Panc1 (cell line): ENCODE measurements at regions of chrX and their contacts with region 1.

Region 1: GRCh38 chrX:84907324-84907968 is 96.2 kb upstream of the APOOL start:
- DNase-seq: no peak
- ATAC-seq: no peak
- H3K4me3 ChIP-seq: no peak overlapping the region
- H3K27ac ChIP-seq: no peak overlapping the region
- H3K4me1 ChIP-seq: no peaks in the 10 kb centered on the region
- H3K27me3 ChIP-seq: no peaks in the 10 kb centered on the region
- CTCF ChIP-seq: peak; percentile 39; the same call in 1 of the 2 replicates

Region 2: DNA sequence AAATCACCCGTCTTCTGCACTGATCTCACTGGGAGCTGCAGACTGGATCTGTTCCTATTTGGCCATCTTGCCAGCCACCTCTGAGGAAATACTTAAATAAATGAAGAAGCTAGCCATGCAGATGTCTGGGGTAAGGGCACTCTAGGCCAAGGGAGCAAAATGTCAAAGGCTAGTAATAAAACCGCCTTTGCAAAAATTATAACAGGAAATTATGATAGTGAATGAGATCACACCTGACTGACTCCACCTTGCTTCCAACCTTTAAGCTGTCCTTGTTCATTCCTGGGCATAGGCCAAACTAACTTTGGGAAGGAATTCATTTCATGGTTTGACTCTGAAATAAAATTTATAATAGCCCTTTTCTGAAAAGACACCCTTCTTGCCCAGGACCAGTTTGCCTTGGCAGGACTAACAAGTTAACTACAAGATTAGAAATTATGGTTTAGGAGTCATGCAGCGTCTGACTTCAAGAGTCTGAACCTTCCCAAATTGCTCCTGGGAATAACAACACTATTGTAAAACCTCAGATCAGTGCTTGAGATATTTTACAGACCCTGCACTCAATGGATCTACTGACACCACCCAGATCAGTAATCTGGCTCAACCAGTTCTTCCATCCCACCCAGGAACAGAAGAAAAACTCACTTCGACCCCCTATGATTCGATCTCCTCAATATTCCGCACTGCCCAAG is 158.3 kb before region 1 on chrX:
- CTCF ChIA-PET with region 1: no interaction called
- POLR2A ChIA-PET with region 1: interaction called, 12 read pairs
- in situ Hi-C with region 1: no loop called
- intact Hi-C with region 1: no loop called
- DNase-seq: no peak
- ATAC-seq: no peak
- H3K4me3 ChIP-seq: no peak overlapping the region
- H3K27ac ChIP-seq: no peak overlapping the region
- H3K4me1 ChIP-seq: no peaks in the 10 kb centered on the region
- H3K27me3 ChIP-seq: no peaks in the 10 kb centered on the region
- CTCF ChIP-seq: no peak